Calu3 (cell line): ENCODE measurements at regions of chr2 and their contacts with region 1.

Region 1: DNA sequence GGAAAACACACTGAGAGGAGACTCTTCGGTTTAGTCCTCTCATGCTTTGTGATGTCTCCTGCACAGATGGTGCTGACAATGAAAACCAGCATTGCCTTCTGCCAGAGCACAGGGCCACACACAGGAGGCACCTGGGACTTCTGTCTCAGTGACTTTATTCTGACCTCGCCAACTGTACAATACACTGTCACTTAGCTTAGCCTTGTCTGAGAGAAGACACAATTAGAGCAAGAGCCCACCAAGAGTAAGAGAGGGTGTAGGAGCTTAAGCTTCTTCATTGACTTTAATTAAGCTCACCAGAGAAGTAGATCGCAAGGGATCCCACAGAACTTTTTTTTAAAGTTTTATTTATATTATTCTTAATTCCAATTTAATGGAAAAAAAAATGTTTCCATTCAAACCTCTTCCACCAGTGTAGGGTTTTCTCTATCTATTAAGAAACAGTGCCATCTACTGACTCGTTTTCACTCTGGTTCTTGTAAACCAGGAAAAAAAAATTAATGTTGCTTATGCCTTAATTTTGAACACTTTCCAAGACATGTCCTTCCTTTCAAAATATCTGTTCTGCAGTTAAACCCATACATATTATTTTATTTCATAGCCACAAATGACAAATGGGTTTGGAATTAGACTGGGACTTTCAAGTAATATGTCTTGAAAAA is 42.4 kb upstream of the DDX18 start:
- DNase-seq: no peak
- H3K4me3 Mint-ChIP-seq: no peak overlapping the region
- H3K27ac Mint-ChIP-seq: no peak overlapping the region
- H3K4me1 Mint-ChIP-seq: peaks cover 8% of the 10 kb centered on the region
- H3K27me3 Mint-ChIP-seq: peaks cover 13% of the 10 kb centered on the region
- CTCF ChIP-seq: peak; percentile 55

Region 2: DNA sequence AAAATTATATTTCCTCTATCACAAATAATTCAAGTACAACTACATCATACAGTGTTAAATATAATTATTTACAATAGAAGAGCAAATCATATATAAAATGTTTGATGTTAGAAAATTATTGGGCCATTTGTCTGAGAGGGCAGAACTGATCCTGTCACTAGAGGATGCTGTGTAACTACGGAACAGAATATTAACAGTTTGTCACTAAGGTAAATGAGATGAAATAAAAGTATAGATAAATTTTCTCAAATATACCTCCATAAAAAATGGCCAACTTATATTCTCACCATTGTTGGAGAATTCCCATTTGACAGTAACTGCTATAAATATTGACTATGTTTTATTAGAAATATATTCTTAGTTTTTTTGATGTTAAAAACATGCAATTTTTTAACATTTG is 1025.0 kb before region 1 on chr2:
- CTCF ChIA-PET with region 1: no interaction called
- intact Hi-C with region 1: loop called (anchors 1 kb)
- DNase-seq: no peak
- H3K4me3 Mint-ChIP-seq: no peak overlapping the region
- H3K27ac Mint-ChIP-seq: no peak overlapping the region
- H3K4me1 Mint-ChIP-seq: no peaks in the 10 kb centered on the region
- H3K27me3 Mint-ChIP-seq: no peaks in the 10 kb centered on the region
- CTCF ChIP-seq: no peak

Region 3: DNA sequence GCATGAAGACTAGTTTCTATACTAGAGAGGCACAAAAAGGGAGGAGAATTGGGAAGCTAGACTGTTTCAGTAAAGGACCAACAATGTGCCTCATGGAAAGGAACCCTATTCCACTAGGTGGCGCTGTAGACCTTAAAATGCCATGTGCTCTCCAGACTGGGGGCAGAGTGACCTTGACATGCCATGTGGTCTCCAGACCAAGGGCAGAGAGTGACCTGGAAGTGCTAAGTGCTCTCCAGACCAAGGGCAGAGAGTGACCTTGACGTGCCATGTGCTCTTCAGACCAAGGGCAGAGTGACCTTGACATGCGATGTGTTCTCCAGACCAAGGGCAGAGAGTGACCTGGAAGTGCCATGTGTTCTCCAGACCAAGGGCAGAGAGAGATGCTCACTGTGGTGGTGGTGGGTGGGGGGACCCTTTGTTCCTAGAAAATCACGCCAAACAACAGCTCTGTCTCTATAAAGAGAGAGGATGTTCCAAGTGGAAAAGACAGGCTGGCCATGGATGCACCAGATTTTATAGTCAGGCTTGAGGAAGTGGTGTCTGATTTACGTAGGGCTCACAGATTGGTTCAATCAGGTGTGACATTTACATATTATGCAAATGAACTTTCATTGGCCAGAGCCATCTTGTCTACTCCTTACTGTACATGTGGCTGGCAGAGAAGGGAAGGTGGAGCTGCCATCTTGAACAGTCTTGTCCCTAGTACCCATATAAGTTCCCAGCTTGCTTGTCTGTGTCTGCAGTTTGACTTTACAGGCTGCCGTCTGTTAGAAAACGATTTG is 301.6 kb before region 1 on chr2:
- CTCF ChIA-PET with region 1: no interaction called
- intact Hi-C with region 1: loop called (anchors 1 kb)
- DNase-seq: peak; percentile 38
- H3K4me3 Mint-ChIP-seq: no peak overlapping the region
- H3K27ac Mint-ChIP-seq: no peak overlapping the region
- H3K4me1 Mint-ChIP-seq: no peaks in the 10 kb centered on the region
- H3K27me3 Mint-ChIP-seq: no peaks in the 10 kb centered on the region
- CTCF ChIP-seq: peak; percentile 59

Region 4: DNA sequence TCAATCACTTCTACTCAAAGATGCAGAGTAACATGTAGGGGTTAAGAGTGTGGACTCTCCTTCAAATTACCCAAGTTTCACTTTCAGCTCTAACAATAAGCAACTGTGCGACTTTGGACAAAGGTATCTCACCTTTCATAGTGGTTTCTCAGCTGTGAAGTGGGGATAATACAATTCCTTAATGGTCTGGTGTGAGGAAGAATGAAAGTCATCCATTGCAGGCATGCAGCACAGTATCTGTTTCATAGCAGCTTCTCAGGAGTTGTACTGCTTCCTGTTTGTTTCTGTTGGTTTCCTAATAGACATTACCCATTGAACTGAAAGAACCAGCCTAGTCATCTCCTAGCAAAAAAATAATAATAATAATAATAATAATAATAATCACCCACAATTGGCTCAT is 116.8 kb after region 1 on chr2:
- CTCF ChIA-PET with region 1: no interaction called
- intact Hi-C with region 1: no loop called
- DNase-seq: no peak
- H3K4me3 Mint-ChIP-seq: no peak overlapping the region
- H3K27ac Mint-ChIP-seq: no peak overlapping the region
- H3K4me1 Mint-ChIP-seq: no peaks in the 10 kb centered on the region
- H3K27me3 Mint-ChIP-seq: peaks cover 39% of the 10 kb centered on the region
- CTCF ChIP-seq: no peak